Uterus (tissue), 4 donors: ENCODE measurements at regions of chr6 and their contacts with region 1.

Region 1: DNA sequence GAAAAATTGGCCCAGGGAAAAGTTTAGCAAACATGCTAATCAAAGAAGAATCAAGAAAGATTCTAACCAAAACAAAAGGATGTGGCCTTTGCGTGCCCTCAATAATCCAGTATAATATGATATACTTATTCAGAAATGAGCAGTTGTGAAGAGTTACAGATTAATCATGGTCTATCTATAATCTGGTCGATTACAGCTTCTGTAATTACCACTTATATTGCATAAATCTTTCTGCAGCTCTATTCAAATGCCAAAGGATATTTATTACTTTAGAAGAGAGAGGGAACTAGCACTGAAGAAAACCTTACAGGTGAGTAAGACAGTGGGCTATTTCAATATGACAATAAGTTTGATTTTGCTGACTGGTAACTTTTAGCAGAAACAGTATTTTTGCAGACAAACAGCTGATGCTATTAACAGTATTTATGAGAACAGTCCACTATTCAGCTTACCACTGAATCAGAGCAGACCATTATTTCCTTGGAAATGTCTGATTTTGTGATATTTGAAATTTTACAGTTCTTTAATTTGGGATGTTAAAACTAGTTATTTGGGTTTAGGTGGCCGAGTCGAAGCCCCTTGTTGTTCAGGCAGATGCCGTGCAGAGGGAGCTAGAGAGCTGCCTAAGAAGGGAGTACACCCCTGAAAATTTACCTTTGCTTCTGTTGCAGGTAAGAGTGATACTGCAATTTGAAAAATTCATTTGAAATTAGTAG is 92.2 kb downstream of the CEP57L1 start:
- DNase-seq: peak; percentile 21 to 30
- H3K4me3 ChIP-seq: no peak overlapping the region
- H3K27ac ChIP-seq: no peak overlapping the region
- H3K4me1 ChIP-seq: no peaks in the 10 kb centered on the region
- H3K27me3 ChIP-seq: no peaks in the 10 kb centered on the region
- CTCF ChIP-seq: peak; percentile 67 to 76 (median 72)
- POLR2A ChIP-seq: no peak

Region 2: DNA sequence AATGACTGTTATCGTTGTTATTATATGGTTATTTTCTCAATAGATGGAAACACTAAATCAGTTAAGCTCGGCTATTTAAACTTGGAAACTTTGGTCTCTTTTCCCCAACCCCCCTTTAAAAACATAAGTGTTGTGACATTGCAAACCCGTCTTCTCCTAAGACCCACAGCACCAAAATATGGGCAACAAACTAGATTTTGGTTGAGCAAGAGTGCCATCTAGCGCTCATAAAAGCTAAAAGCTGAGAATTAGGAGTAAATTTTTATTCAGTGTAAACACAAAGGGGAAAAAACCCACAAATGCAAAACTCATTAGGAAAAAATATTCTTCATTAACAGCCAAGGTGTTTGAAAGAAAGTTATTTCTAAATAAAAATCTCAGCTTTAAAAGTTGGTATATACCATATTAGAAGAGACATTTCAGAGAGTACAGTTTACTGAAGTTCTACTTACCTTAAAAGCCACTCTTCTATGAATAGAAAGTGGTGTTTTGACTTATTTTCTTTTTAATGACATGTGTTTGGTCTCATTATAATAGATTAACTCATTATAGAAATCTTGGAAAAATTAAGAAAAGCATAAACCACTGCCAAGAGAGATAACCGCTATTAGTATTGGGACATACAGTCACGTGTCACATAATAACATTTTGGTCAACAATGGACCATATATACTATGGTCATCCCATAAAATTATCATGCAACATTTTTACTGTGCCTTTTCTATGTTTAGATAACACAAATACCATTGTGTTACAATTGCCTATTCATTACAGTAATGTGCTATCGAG is 114.0 kb before region 1 on chr6:
- intact Hi-C with region 1: no loop called
- DNase-seq: peak; percentile 24 to 63
- H3K4me3 ChIP-seq: no peak overlapping the region
- H3K27ac ChIP-seq: no peak overlapping the region
- H3K4me1 ChIP-seq: no peaks in the 10 kb centered on the region
- H3K27me3 ChIP-seq: no peaks in the 10 kb centered on the region
- CTCF ChIP-seq: peak; percentile 64 to 81 (median 75)
- POLR2A ChIP-seq: no peak

Region 3: DNA sequence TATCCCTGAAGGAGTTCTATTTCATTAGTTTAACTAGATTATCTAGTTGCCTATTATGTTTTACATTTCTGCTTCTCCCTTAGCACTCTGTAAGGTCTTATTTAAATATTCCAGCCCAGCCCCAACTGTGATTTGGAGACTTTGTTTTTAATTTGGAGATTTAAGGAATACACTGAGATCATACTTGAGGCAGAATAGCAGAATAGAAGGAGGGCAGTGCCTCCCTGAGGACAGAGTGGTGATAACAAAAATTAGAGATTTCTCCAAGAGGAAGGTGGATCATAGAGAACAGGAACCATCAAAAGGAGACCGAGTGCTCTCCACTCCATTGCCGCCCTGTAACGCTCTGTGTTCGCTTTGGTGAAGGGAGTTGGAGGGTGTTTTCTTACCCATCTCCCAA is 209.5 kb after region 1 on chr6:
- intact Hi-C with region 1: loop called (anchors 10 kb)
- DNase-seq: no peak
- H3K4me3 ChIP-seq: no peak overlapping the region
- H3K27ac ChIP-seq: no peak overlapping the region
- H3K4me1 ChIP-seq: no peaks in the 10 kb centered on the region
- H3K27me3 ChIP-seq: no peaks in the 10 kb centered on the region
- CTCF ChIP-seq: peak in 3 of 4 experiments; percentile 12 to 13 (median 12)
- POLR2A ChIP-seq: no peak